H1 (cell line): ENCODE measurements at regions of chr16 and their contacts with region 1.

Region 1: DNA sequence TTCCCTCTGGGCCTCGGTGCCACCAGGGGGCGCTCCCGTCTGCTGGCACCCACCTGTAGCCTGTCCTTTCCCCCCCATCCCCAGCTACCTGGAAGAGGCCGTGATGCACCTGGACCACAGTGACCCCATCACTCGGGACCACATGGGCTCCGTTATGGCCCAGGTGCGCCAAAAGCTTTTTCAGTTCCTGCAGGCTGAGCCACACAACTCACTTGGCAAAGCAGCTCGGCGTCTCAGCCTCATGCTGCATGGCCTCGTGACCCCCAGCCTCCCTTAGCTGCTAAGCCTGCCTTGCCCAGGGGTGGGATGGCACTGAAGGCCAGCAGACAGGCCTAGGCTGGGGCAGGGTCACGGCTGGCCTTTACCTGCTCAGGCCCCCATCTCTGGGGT is 818 bp upstream of the NRN1L start:
- DNase-seq: peak in 1 of 2 experiments; percentile 90
- H3K4me3 ChIP-seq: no peak overlapping the region
- H3K27ac ChIP-seq: no peak overlapping the region
- H3K4me1 ChIP-seq: peaks cover 5 to 15% (median 11%) of the 10 kb centered on the region in 4 experiments
- H3K27me3 ChIP-seq: no peaks in the 10 kb centered on the region
- CTCF ChIP-seq: peak; percentile 87 to 94 (median 88)
- EP300 ChIP-seq: peak in 1 of 2 experiments; percentile 31; a peak in 1 of 3 replicates
- POLR2A ChIP-seq: no peak
- RAD21 ChIP-seq: peak; percentile 83 to 87

Region 2: GRCh38 chr16:67816240-67817031 is 67.4 kb before region 1 on chr16:
- CTCF ChIA-PET with region 1: interaction called, 10 read pairs
- POLR2A ChIA-PET with region 1: interaction called, 3 read pairs
- DNase-seq: peak; percentile 25 to 99
- H3K4me3 ChIP-seq: no peak overlapping the region
- H3K27ac ChIP-seq: no peak overlapping the region
- H3K4me1 ChIP-seq: no peaks in the 10 kb centered on the region
- H3K27me3 ChIP-seq: no peaks in the 10 kb centered on the region; a peak in 1 of 7 replicates
- CTCF ChIP-seq: peak; percentile 98 to 100 (median 99)
- EP300 ChIP-seq: no peak
- POLR2A ChIP-seq: no peak
- RAD21 ChIP-seq: peak; percentile 78 to 86

Region 3: DNA sequence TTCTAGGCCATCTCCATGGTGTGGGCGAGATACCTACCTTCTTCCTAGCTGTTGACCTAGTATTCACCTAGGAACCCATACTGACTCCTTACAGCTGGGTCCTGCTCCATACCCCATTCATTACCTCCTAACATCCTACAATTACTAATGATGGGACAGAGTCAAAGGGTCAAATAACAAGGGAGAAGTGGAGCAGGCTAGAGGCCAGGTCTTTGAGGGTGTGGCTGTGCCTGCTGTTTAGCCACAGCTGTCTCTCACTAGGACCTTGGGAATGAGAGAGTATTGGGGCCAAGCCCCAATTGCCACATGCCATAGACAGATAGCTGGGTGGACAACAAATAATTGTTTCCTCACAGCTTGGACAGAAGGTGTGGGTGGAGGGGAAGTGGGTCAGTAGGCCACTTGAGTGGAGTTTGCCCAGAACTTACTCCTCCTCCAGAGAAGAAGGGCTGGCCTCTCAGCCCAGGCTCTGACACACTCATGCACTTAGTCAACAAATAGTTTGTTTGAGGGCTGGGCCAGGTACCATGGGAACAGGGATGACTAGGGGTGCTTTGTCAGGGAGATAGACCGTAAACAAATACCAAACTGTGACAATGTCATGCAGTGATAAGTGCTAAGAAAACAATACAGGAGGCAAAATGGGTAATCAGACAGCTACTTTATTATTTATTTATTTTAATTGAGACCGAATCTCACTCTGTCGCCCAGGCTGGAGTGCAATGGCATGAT is 26.2 kb before region 1 on chr16:
- CTCF ChIA-PET with region 1: interaction called, 20 read pairs
- POLR2A ChIA-PET with region 1: interaction called, 3 read pairs
- DNase-seq: no peak
- H3K4me3 ChIP-seq: peak overlapping the region in 2 of 4 experiments; percentile 17 to 19; a peak in 3 of 8 replicates
- H3K27ac ChIP-seq: peak overlapping the region; percentile 84
- H3K4me1 ChIP-seq: peaks cover 8 to 15% (median 13%) of the 10 kb centered on the region in 4 experiments
- H3K27me3 ChIP-seq: no peaks in the 10 kb centered on the region
- CTCF ChIP-seq: no peak
- EP300 ChIP-seq: peak in 1 of 2 experiments; percentile 87; a peak in 1 of 3 replicates
- POLR2A ChIP-seq: no peak
- RAD21 ChIP-seq: no peak

Region 4: GRCh38 chr16:67872786-67873537 is 10.9 kb before region 1 on chr16 and contains the start of gene EDC4:
- CTCF ChIA-PET with region 1: interaction called, 27 read pairs
- POLR2A ChIA-PET with region 1: interaction called, 13 read pairs
- DNase-seq: peak in 1 of 2 experiments; percentile 92
- H3K4me3 ChIP-seq: peak within 1 kb of the TSS; percentile 85 to 97 (median 93)
- H3K27ac ChIP-seq: peak within 1 kb of the TSS; percentile 53
- H3K4me1 ChIP-seq: peaks cover 0 to 7% (median 3%) of the 10 kb centered on the region in 4 experiments; a peak in 3 of 7 replicates
- H3K27me3 ChIP-seq: no peaks in the 10 kb centered on the region
- CTCF ChIP-seq: no peak; a peak in 1 of 4 replicates
- EP300 ChIP-seq: no peak; a peak in 1 of 3 replicates
- POLR2A ChIP-seq: peak in 1 of 2 experiments; percentile 74; a peak in 2 of 3 replicates
- RAD21 ChIP-seq: peak in 1 of 2 experiments; percentile 2; a peak in 1 of 4 replicates
- total RNA-seq, gene EDC4: 72.7 and 73.4 TPM in 2 replicates

Region 5: GRCh38 chr16:67917852-67918236 is 34.0 kb after region 1 on chr16:
- CTCF ChIA-PET with region 1: interaction called, 623 read pairs
- POLR2A ChIA-PET with region 1: interaction called, 4 read pairs
- DNase-seq: no peak
- H3K4me3 ChIP-seq: no peak overlapping the region
- H3K27ac ChIP-seq: no peak overlapping the region
- H3K4me1 ChIP-seq: peaks cover 0 to 10% (median 4%) of the 10 kb centered on the region in 4 experiments; a peak in 6 of 7 replicates
- H3K27me3 ChIP-seq: no peaks in the 10 kb centered on the region
- CTCF ChIP-seq: no peak
- EP300 ChIP-seq: no peak
- POLR2A ChIP-seq: no peak
- RAD21 ChIP-seq: no peak

Region 6: GRCh38 chr16:67935402-67936123 is 51.7 kb after region 1 on chr16:
- CTCF ChIA-PET with region 1: interaction called, 623 read pairs
- POLR2A ChIA-PET with region 1: interaction called, 45 read pairs
- DNase-seq: peak; percentile 90 to 93
- H3K4me3 ChIP-seq: peak overlapping the region; percentile 69 to 98 (median 92)
- H3K27ac ChIP-seq: peak overlapping the region; percentile 74; the same call in 1 of the 2 replicates
- H3K4me1 ChIP-seq: peaks cover 0 to 15% (median 8%) of the 10 kb centered on the region in 4 experiments; a peak in 5 of 7 replicates
- H3K27me3 ChIP-seq: no peaks in the 10 kb centered on the region
- CTCF ChIP-seq: no peak
- EP300 ChIP-seq: no peak
- POLR2A ChIP-seq: peak; percentile 49 to 73
- RAD21 ChIP-seq: no peak